GM18951 (cell line): ENCODE measurements at regions of chr11 and their contacts with region 1.

Region 1: GRCh38 chr11:113994077-113994954 is 19.4 kb downstream of the HTR3A start:
- POLR2A ChIP-seq: no peak

Region 2: GRCh38 chr11:114109206-114110090 is 115.1 kb after region 1 on chr11:
- in situ Hi-C with region 1: no loop called
- POLR2A ChIP-seq: no peak

Region 3: GRCh38 chr11:114257621-114258558 is 263.6 kb after region 1 on chr11:
- in situ Hi-C with region 1: loop called (anchors 10 kb)
- POLR2A ChIP-seq: no peak